ENCODE measurements at regions of chr7 and their contacts with region 1.

Region 1: GRCh38 chr7:127253281-127254162 is 781 bp upstream of the GRM8 start:
- DNase-seq: peak; percentile 52
- H3K4me3 ChIP-seq: peak overlapping the region; percentile 68
- H3K27ac ChIP-seq: no peak overlapping the region
- H3K4me1 ChIP-seq: no peaks in the 10 kb centered on the region
- CTCF ChIP-seq: peak; percentile 82

Region 2: GRCh38 chr7:126803060-126803665 is 450.4 kb before region 1 on chr7:
- CTCF ChIA-PET with region 1: no interaction called
- POLR2A ChIA-PET with region 1: no interaction called
- intact Hi-C with region 1: loop called (anchors 5 kb)
- DNase-seq: peak; percentile 65
- H3K4me3 ChIP-seq: no peak overlapping the region
- H3K27ac ChIP-seq: no peak overlapping the region
- H3K4me1 ChIP-seq: no peaks in the 10 kb centered on the region
- CTCF ChIP-seq: peak; percentile 87

Region 3: DNA sequence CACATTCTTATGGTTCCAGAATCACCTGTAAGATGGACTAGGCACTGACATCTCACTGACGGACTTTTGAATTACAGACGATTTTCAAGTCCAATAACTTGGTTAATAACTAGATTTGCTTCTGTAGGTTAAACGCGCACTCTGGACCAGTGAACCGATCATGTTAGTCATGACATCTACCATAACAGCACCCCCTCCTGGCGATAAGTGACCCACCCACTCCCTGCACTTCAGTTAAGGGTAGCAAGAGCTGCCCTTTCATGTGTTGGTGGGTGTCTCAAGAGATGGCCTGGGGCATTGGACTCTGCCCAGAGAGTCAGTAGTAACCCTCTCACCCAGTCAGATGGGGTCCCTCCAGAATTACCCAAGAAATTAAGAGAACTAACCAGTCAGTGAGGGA is 13.7 kb before region 1 on chr7:
- CTCF ChIA-PET with region 1: no interaction called
- POLR2A ChIA-PET with region 1: no interaction called
- intact Hi-C with region 1: no loop called
- DNase-seq: no peak
- H3K4me3 ChIP-seq: no peak overlapping the region
- H3K27ac ChIP-seq: no peak overlapping the region
- H3K4me1 ChIP-seq: no peaks in the 10 kb centered on the region
- CTCF ChIP-seq: peak; percentile 55